Calu3 (cell line): ENCODE measurements at regions of chr5 and their contacts with region 1.

Region 1: GRCh38 chr5:7815892-7816534 is 34.9 kb downstream of the CFAP90 start:
- DNase-seq: peak; percentile 90
- H3K4me3 Mint-ChIP-seq: no peak overlapping the region
- H3K27ac Mint-ChIP-seq: no peak overlapping the region
- H3K4me1 Mint-ChIP-seq: no peaks in the 10 kb centered on the region
- H3K27me3 Mint-ChIP-seq: peaks cover 71% of the 10 kb centered on the region
- CTCF ChIP-seq: peak; percentile 86

Region 2: DNA sequence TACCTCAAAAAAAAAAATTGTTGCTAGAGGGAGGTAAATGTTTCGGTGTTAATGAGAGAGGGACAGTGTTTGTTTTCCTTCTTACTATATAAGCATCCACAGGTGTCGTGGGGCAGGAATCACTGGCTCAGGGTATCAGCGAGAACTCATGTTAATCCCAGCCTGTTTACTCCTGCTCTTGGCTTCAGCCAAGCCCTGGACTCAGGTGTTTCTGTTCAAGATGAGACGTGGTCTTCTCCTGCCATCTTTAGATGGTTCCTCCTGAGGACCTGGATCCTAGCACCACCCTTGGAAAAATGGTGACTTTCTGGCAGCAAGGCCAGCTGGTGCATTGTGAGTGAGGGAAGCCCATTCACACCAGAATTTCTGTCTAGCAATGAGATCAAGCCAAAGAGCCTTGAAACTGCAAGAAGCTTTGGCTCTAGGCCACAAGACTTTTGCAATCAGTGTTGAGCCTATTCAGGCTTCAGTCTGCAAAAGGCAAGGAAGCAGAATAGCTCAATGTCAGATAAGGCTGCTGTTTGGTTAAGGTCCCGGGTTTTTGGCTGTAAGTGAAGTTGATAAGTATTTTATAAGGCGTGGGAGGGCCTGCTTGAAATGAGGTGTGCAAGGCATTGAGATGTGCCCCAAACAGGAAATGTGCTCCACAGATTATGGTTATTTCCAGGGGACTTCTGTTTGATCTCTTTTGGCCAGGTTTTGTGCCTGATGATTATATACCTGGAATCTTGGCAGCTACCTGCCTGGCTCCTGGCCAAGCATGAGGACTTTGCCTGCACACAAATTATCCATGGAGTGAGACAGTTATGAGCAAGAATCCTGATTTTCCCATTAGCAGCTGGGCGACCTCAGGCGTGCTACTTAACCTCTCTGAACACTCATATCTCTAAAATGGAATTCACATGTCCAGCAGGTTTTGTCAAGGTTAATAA is 1002.9 kb before region 1 on chr5:
- CTCF ChIA-PET with region 1: no interaction called
- intact Hi-C with region 1: loop called (anchors 10 kb)
- DNase-seq: no peak
- H3K4me3 Mint-ChIP-seq: no peak overlapping the region
- H3K27ac Mint-ChIP-seq: no peak overlapping the region
- H3K4me1 Mint-ChIP-seq: peaks cover 9% of the 10 kb centered on the region
- H3K27me3 Mint-ChIP-seq: peaks cover 3% of the 10 kb centered on the region
- CTCF ChIP-seq: no peak